ENCODE measurements at regions of chr5 and their contacts with region 1.

Region 1: DNA sequence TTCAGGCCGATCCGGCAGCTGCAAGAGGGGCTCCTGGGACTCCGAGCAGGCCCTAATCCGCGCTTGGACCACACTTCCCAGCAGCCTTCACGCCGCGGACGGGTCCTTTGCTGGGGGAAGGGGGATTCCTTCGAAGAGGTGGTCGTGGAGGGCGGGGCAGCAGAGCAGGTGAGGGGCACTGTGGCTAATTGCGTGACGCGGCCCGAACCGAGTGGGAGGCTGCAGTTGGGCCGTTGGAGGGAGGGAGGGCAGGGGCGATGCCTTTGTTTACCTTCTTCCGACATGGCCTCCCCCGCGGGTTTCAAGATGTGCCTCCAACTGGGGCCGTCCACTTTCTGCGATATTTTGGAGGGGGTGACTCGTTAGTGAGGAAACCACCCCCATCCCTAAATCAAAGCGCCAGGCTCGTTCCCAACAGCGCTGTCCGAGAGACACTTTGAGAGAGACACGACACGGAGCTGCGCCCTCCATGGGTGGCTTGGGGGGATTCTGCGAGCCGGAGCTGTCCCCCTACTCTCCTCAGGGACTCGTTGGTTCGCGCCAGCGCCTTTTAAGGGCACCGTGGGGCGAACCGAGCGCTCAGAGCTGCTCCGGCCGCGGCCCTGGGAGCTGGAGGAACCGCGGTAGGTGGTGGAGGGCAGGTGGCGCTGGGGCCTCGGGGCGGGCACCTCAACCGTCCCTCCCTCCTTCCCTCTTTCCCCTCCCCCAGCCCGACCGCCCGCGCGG is at the start of gene FAM53C:
- DNase-seq: peak; percentile 59
- H3K4me3 ChIP-seq: peak within 1 kb of the TSS; percentile 77
- H3K27me3 ChIP-seq: no peaks in the 10 kb centered on the region
- CTCF ChIP-seq: no peak
- polyA plus RNA-seq, gene FAM53C: 30.1 and 31.3 TPM in 2 replicates

Region 2: DNA sequence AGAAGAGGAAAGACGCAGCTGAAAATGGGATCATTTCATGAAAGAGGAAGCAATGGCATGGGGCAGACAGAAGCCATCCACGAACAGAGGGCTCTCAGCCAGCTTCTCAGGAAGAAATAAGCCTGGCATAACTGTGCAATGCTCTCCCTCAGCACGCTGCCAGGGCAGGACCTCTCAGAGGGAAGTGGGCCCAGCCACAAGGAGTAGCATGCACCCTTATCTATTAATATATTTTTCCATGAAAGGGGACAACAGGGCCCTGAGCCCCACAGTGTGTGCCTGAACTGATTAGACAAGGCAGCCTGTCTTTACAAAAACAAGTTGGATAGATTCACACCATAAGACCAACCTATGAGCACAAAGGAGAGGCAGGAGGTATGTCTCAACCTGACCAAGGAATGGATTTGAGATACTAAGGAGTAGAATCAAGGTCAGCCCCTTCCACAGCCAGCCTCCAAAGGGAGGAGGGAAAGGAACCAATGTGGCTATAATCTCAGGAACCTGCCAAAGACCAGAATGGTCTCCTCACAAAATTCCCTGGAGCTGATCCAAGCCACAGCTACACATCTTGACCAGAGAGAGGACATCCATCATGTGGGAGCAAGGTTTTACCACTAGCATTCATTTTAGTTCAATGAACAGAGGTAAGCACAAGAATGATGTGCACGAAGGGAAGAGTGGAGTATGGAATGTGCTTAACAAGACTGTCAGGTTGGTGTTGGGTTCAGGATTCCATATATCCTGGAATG is 705.5 kb after region 1 on chr5:
- CTCF ChIA-PET with region 1: no interaction called
- POLR2A ChIA-PET with region 1: interaction called, 19 read pairs
- DNase-seq: no peak
- H3K4me3 ChIP-seq: no peak overlapping the region
- H3K27me3 ChIP-seq: no peaks in the 10 kb centered on the region
- CTCF ChIP-seq: no peak

Measured in BJ (cell line).